ENCODE measurements at regions of chr10 and their contacts with region 1.

Region 1: DNA sequence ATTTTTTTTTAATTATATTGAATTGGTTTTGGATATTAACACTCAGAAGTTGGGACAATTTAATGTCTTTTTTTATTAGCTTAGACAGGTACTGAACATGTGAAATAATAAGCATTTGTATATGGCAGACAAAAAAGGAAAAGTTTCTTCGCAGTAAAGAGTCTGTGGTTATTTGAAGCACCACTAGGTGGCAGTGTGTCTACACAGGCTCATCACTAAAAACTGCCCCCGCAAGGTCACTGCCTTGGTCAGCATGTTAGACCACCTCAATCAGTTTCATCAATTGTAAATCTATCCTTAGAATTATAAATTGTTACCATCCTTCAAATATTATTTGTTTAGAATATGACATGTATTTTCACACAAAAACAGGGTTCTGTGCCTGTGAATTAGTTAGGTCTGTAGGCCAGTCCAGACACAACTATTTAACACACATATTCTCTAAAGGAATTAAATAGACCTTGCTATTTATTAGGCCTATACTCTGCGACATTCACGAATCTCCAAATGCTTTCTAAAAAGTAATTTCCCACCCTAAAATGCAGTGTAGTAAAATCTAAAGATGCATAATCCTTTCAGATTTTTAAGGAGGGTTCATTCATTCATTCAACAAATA is 17.0 kb downstream of the PNLIPRP3 start:
- DNase-seq: peak; percentile 52
- ATAC-seq: peak; percentile 90
- H3K4me3 ChIP-seq: no peak overlapping the region
- H3K27ac ChIP-seq: no peak overlapping the region
- H3K4me1 ChIP-seq: no peaks in the 10 kb centered on the region
- H3K27me3 ChIP-seq: peaks cover 17% of the 10 kb centered on the region
- CTCF ChIP-seq: peak; percentile 80 to 98 (median 94)
- POLR2A ChIP-seq: no peak
- RAD21 ChIP-seq: peak; percentile 78

Region 2: GRCh38 chr10:116490028-116490662 is 45.5 kb after region 1 on chr10:
- CTCF ChIA-PET with region 1: interaction called, 3 read pairs
- POLR2A ChIA-PET with region 1: no interaction called
- RAD21 ChIA-PET with region 1: no interaction called
- intact Hi-C with region 1: loop called (anchors 2 kb)
- DNase-seq: peak; percentile 28
- ATAC-seq: peak; percentile 82
- H3K4me3 ChIP-seq: no peak overlapping the region
- H3K27ac ChIP-seq: no peak overlapping the region
- H3K4me1 ChIP-seq: no peaks in the 10 kb centered on the region
- H3K27me3 ChIP-seq: peaks cover 23% of the 10 kb centered on the region
- CTCF ChIP-seq: peak; percentile 60 to 94 (median 61)
- POLR2A ChIP-seq: no peak
- RAD21 ChIP-seq: peak; percentile 63

Measured in HCT116 (cell line).